ENCODE measurements at regions of chr1 and their contacts with region 1.

Region 1: DNA sequence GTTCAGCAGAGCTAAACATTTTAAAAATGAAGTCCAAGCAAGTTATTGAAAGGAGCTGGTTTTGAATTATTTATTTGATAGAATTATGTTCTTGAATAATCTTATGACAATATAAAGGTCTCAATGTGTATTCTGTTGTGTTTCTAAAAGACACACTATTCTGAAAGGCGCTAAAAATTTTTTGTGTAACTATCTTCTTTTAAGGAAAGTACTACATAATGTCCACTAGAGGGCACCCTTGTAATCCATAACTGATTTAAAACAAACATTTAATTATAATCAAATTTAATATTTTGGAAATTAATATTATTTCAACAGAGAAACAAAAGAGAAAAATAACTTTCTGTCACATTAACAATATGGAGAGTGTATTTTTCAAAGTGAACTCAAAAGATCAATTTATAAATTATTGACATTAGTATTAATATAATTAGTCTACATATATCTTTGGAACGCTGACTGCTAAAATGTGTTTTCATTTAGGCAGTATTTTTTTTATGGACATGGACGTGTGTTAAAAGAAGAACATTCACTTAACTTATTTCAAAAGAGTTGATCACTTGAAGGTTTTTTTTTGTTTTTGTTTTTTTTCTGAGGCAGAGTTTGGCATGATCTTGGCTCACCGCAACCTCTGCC is 248.4 kb downstream of the DENND1B start:
- DNase-seq: peak; percentile 50
- H3K4me3 Mint-ChIP-seq: no peak overlapping the region
- H3K27ac Mint-ChIP-seq: no peak overlapping the region
- H3K4me1 Mint-ChIP-seq: no peaks in the 10 kb centered on the region
- H3K27me3 Mint-ChIP-seq: no peaks in the 10 kb centered on the region
- CTCF ChIP-seq: peak; percentile 73

Region 2: DNA sequence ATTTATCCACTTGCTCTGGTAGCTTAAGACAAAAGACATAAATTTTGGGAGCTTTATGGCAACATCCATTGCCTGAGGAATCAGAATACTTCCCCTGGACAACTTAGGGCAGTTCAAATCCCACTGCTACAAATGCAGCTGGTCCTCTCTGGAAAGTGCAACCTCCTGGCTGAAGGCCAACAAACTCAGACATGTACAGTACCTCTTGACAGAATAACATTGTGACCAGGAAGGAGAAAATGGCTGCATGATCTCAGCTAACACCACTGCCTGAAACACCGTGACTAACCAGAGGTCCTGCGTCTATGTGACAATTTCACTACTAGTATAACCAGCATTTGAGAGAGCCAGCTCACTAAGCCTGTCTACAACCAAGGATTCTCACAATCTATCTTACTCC is 39.9 kb before region 1 on chr1:
- CTCF ChIA-PET with region 1: no interaction called
- POLR2A ChIA-PET with region 1: no interaction called
- intact Hi-C with region 1: no loop called
- DNase-seq: peak; percentile 30
- H3K4me3 Mint-ChIP-seq: no peak overlapping the region
- H3K27ac Mint-ChIP-seq: no peak overlapping the region
- H3K4me1 Mint-ChIP-seq: peaks cover 9% of the 10 kb centered on the region
- H3K27me3 Mint-ChIP-seq: no peaks in the 10 kb centered on the region
- CTCF ChIP-seq: no peak

Region 3: DNA sequence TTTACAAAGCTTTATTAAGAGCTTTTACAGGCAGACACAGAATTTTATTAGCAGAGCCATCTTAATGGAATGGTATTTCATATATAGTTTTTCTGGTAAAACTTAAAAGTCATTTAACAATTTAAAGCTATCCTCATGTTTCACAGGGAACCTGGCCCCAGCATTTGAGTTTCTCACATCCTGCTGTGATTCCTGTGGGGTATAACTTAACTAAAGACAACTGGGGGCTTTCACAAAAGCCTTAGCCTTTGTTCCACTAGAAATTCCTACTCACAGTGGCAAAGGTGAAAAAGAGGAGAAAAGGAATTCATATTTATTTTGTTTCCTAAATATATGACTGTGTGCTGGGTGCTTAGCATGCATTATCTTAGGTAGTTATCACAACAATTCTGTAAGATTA is 14.6 kb after region 1 on chr1:
- CTCF ChIA-PET with region 1: interaction called, 18 read pairs
- POLR2A ChIA-PET with region 1: interaction called, 3 read pairs
- intact Hi-C with region 1: no loop called
- DNase-seq: no peak
- H3K4me3 Mint-ChIP-seq: no peak overlapping the region
- H3K27ac Mint-ChIP-seq: no peak overlapping the region
- H3K4me1 Mint-ChIP-seq: peaks cover 8% of the 10 kb centered on the region
- H3K27me3 Mint-ChIP-seq: no peaks in the 10 kb centered on the region
- CTCF ChIP-seq: no peak

Measured in MCF 10A (cell line).